CD4-positive, alpha-beta T cell (primary cell): ENCODE measurements at regions of chr18 and their contacts with region 1.

Region 1: DNA sequence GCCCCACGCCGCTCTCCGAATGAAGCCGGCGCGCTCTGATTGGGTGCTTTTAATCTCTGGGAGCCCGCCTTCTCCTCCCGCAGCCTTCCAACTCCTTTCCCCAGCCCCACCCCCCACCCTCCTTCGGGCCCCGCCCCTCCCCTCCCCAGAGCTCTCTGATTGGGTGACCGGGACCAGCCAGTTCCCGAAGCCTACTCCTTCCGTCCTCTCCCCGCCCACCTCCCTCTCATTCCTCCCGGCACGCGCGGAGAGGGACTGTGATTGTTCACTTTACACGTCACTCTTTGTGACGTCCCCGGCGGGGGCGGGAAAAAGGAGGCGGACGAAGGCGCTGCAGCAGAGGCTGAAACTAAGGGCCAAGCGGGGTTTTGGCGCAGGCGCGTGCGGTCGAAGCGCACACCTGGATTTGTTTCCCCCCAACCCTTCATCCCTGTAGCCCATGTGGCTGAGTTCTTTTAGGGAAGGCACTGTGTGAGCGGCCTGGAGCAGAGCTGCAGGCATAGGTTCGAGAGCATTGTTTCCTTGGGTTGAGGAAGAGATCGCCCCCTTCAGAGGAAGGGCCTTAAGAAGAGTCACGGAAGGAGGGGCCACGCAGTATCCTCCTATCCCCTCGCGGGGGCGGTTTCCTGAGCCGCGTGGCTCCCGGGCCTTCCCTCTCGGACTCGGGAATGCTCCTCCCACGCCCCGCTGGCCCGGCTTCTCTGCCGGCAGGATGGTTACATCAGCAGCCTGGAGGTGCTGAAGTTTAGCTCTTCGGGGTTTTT is at the start of gene MEX3C:
- DNase-seq: peak; percentile 97 to 99 (median 99)
- ATAC-seq: peak; percentile 83
- H3K4me3 ChIP-seq: peak within 1 kb of the TSS; percentile 88
- H3K4me3 Mint-ChIP-seq: peak within 1 kb of the TSS; percentile 94
- H3K27ac ChIP-seq: peak within 1 kb of the TSS; percentile 83 to 86
- H3K27ac Mint-ChIP-seq: peak within 1 kb of the TSS; percentile 96
- H3K4me1 ChIP-seq: peaks cover 17% of the 10 kb centered on the region
- H3K4me1 Mint-ChIP-seq: peaks cover 32% of the 10 kb centered on the region
- H3K27me3 ChIP-seq: no peaks in the 10 kb centered on the region
- H3K27me3 Mint-ChIP-seq: no peaks in the 10 kb centered on the region
- CTCF ChIP-seq: peak; percentile 31
- total RNA-seq, gene MEX3C: 70.8 to 76.1 TPM

Region 2: DNA sequence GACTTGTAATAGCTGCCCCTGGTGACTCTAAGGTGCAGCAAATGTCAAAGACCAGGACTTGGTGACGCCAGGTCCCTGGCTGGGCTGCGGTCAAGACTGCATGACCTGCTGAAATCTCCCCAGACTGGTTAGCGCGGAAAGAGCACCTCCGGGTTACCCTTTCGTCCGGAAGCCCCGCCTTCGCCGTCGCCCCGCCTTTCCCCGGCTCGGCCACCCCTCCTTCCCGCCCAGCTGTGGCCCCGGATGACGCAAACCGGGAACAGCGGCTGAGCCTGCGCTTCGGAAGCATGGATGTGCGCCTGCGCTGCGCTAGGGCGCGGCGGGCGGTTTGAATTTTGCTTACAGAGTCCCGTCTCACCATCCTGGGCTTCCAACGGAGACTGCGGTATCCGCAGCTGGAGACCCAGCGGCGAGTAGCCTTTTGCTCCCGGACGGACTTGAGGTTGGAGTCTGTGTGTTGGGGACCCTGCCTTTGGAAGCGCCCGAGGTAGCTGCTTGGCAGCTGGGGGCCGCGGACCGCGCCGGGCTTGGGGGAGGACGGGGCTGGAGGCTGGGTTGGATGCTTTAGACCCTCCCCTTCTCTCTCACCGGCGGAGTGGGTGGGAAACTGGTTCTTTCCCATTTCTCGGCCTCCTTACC is 823.0 kb before region 1 on chr18 and contains the start of gene SKA1:
- CTCF ChIA-PET with region 1: no interaction called
- POLR2A ChIA-PET with region 1: no interaction called
- intact Hi-C with region 1: loop called in 1 of 2 experiments (anchors 5 kb)
- DNase-seq: peak; percentile 84 to 96 (median 90)
- ATAC-seq: peak; percentile 100
- H3K4me3 ChIP-seq: peak within 1 kb of the TSS; percentile 77
- H3K4me3 Mint-ChIP-seq: peak within 1 kb of the TSS; percentile 80
- H3K27ac ChIP-seq: peak within 1 kb of the TSS; percentile 56 to 58
- H3K27ac Mint-ChIP-seq: peak within 1 kb of the TSS; percentile 81
- H3K4me1 ChIP-seq: peaks cover 12% of the 10 kb centered on the region
- H3K4me1 Mint-ChIP-seq: peaks cover 14% of the 10 kb centered on the region
- H3K27me3 ChIP-seq: peaks cover 0 to 3% of the 10 kb centered on the region in 2 experiments
- H3K27me3 Mint-ChIP-seq: no peaks in the 10 kb centered on the region
- CTCF ChIP-seq: no peak
- total RNA-seq, gene SKA1: 0.08 to 0.20 TPM

Region 3: GRCh38 chr18:50967714-50968661 is 229.9 kb before region 1 on chr18 and contains the start of gene ELAC1:
- CTCF ChIA-PET with region 1: no interaction called
- POLR2A ChIA-PET with region 1: interaction called, 6 read pairs
- intact Hi-C with region 1: loop called in 1 of 2 experiments (anchors 5 kb)
- DNase-seq: peak; percentile 43 to 86 (median 59)
- ATAC-seq: peak; percentile 89
- H3K4me3 ChIP-seq: peak within 1 kb of the TSS; percentile 88
- H3K4me3 Mint-ChIP-seq: peak within 1 kb of the TSS; percentile 96
- H3K27ac ChIP-seq: peak within 1 kb of the TSS; percentile 78 to 85
- H3K27ac Mint-ChIP-seq: peak within 1 kb of the TSS; percentile 83
- H3K4me1 ChIP-seq: peaks cover 9% of the 10 kb centered on the region
- H3K4me1 Mint-ChIP-seq: peaks cover 37% of the 10 kb centered on the region
- H3K27me3 ChIP-seq: no peaks in the 10 kb centered on the region
- H3K27me3 Mint-ChIP-seq: no peaks in the 10 kb centered on the region
- CTCF ChIP-seq: no peak
- total RNA-seq, gene ELAC1: 3.0 to 4.6 TPM

Region 4: GRCh38 chr18:51153659-51154371 is 44.0 kb before region 1 on chr18:
- CTCF ChIA-PET with region 1: interaction called, 6 read pairs
- POLR2A ChIA-PET with region 1: interaction called, 85 read pairs
- intact Hi-C with region 1: loop called (anchors 1 to 2 kb)
- DNase-seq: peak in 13 of 14 experiments; percentile 16 to 80 (median 29)
- ATAC-seq: peak; percentile 49
- H3K4me3 ChIP-seq: peak overlapping the region; percentile 48
- H3K4me3 Mint-ChIP-seq: peak overlapping the region; percentile 87
- H3K27ac ChIP-seq: peak overlapping the region; percentile 53 to 68
- H3K27ac Mint-ChIP-seq: peak overlapping the region; percentile 90
- H3K4me1 ChIP-seq: peaks cover 37% of the 10 kb centered on the region
- H3K4me1 Mint-ChIP-seq: peaks cover 40% of the 10 kb centered on the region
- H3K27me3 ChIP-seq: no peaks in the 10 kb centered on the region
- H3K27me3 Mint-ChIP-seq: no peaks in the 10 kb centered on the region
- CTCF ChIP-seq: no peak